A673 (cell line): ENCODE measurements at regions of chr12 and their contacts with region 1.

Region 1: DNA sequence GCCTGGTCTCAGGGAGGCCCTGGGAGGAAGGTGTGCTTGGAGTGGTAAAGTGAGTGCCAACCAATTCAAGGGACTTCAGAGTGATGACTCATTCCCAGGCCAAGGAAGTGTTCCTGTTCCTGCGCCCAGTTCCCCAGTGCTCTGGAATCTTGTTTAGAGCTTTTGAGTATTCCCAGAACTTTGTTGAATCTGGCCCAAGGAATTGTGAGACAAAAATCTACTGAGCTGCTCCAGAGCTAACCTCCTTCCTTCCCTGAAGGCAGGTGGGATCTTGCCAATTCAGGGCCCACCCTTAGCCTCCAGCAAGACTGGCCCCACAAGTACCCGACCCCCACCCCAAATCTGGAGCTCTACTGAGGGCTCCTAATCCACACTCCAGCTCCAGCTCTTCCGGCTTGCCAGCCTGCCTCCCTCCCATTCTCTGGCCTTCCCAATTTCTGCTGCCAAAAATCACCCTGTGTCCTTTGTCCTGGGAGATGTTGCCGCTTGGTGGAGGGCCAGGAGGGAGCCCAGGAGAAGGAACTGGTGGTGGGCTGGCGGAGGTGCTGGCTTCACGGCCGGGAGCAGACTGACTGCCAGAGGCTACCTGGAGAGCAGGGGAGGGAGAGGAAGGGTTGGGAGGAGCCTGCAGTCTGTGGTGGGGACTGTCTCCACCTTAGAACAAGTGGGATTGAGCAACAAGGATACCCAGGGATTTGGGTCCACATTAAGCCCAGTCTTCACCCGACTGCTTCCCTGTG is 2.0 kb upstream of the ATN1 start:
- DNase-seq: peak; percentile 81
- H3K4me3 ChIP-seq: peak overlapping the region; percentile 36
- H3K27ac ChIP-seq: peak overlapping the region; percentile 95
- H3K4me1 ChIP-seq: peaks cover 39% of the 10 kb centered on the region
- H3K27me3 ChIP-seq: no peaks in the 10 kb centered on the region
- CTCF ChIP-seq: no peak

Region 2: DNA sequence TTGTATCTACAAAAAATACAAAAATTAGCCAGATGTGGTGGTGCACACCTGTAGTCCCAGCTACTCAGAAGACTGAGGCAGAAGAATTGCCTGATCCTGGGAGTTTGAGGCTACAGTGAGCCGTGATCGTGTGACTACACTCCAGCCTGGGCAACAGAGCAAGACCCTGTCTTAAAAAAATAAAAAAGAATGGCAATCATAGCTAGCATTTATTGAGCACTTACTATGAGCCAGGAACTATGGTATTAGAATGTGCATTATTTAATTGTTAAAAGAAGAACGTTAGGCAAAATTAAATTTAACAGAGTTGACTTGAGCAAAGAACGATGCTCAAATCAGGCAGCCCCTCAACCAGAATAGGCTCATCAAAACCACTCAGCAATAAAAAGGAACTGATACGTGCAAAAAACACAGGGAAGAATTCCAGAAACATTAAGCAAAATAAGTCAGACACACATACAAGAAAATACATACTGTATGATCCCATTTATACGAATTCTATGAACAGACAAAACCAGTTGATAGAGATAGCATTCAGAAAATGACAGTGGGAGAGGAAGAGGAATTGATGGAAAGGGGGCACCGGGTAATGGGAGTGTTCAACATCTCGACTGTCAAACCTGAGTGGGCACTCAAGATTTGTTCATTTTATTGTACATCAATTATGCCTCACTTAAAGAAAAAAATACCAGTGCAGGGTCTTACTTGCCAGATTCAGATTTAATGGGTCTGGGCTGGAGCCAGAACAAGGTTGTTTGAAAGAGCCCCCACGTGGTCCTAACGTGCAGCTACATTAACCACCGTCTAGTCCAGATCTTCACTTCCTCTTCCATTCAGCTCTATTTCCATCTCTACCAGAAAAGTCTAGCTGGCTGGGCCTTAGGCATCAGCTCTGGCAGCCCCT is 558.4 kb before region 1 on chr12:
- CTCF ChIA-PET with region 1: no interaction called
- POLR2A ChIA-PET with region 1: no interaction called
- intact Hi-C with region 1: no loop called
- DNase-seq: peak; percentile 76
- H3K4me3 ChIP-seq: no peak overlapping the region
- H3K27ac ChIP-seq: no peak overlapping the region
- H3K4me1 ChIP-seq: peaks cover 18% of the 10 kb centered on the region
- H3K27me3 ChIP-seq: no peaks in the 10 kb centered on the region
- CTCF ChIP-seq: peak; percentile 47

Region 3: GRCh38 chr12:6688999-6689882 is 236.5 kb before region 1 on chr12 and contains the start of gene ZNF384:
- CTCF ChIA-PET with region 1: no interaction called
- POLR2A ChIA-PET with region 1: no interaction called
- intact Hi-C with region 1: no loop called
- DNase-seq: peak; percentile 99
- H3K4me3 ChIP-seq: peak within 1 kb of the TSS; percentile 86
- H3K27ac ChIP-seq: peak within 1 kb of the TSS; percentile 100
- H3K4me1 ChIP-seq: peaks cover 29% of the 10 kb centered on the region
- H3K27me3 ChIP-seq: no peaks in the 10 kb centered on the region
- CTCF ChIP-seq: no peak
- total RNA-seq, gene ZNF384: 88.8 and 92.5 TPM in 2 replicates

Region 4: GRCh38 chr12:6937481-6938297 is 12.0 kb after region 1 on chr12:
- CTCF ChIA-PET with region 1: interaction called, 11 read pairs
- POLR2A ChIA-PET with region 1: no interaction called
- intact Hi-C with region 1: loop called (anchors 2 kb)
- DNase-seq: peak; percentile 98
- H3K4me3 ChIP-seq: peak overlapping the region; percentile 62
- H3K27ac ChIP-seq: peak overlapping the region; percentile 98
- H3K4me1 ChIP-seq: peaks cover 16% of the 10 kb centered on the region
- H3K27me3 ChIP-seq: no peaks in the 10 kb centered on the region
- CTCF ChIP-seq: peak; percentile 99

Region 5: DNA sequence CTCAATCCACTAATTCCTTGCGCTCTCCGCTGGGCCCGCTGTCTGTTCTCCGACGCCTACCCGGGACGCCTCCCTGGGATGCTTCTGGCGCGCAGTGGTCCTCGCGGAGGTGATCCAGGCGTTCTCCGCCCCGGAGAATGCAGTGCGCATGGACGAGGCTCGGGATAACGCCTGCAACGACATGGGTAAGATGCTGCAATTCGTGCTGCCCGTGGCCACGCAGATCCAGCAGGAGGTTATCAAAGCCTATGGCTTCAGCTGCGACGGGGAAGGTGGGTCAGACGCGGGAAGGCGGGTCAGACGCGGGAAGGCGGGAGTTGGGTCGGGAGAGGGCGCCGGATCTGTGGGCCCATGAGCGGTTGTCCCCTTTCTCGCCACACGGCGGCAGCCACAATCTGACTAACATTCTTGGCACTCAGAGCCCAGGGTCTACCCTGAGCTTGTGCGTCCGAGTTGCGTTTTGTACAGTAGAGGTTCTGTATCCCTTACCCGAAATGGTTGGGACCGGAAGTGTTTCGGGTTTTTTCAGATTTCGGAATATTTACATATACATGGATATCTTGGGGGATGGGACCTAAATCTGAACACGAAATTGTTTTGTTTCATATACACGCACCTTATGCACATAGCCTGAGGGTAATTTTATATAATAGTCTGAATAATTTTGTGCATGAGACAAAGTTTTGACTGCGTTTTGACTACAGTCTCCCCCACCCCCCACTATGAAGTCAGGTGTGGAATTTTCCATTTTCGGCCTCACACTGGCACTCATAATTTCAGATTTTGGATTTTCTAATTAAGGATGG is 18.9 kb after region 1 on chr12:
- CTCF ChIA-PET with region 1: interaction called, 5 read pairs
- POLR2A ChIA-PET with region 1: interaction called, 11 read pairs
- intact Hi-C with region 1: loop called (anchors 2 kb)
- DNase-seq: peak; percentile 97
- H3K4me3 ChIP-seq: peak overlapping the region; percentile 64
- H3K27ac ChIP-seq: peak overlapping the region; percentile 99
- H3K4me1 ChIP-seq: peaks cover 18% of the 10 kb centered on the region
- H3K27me3 ChIP-seq: no peaks in the 10 kb centered on the region
- CTCF ChIP-seq: peak; percentile 92

Region 6: DNA sequence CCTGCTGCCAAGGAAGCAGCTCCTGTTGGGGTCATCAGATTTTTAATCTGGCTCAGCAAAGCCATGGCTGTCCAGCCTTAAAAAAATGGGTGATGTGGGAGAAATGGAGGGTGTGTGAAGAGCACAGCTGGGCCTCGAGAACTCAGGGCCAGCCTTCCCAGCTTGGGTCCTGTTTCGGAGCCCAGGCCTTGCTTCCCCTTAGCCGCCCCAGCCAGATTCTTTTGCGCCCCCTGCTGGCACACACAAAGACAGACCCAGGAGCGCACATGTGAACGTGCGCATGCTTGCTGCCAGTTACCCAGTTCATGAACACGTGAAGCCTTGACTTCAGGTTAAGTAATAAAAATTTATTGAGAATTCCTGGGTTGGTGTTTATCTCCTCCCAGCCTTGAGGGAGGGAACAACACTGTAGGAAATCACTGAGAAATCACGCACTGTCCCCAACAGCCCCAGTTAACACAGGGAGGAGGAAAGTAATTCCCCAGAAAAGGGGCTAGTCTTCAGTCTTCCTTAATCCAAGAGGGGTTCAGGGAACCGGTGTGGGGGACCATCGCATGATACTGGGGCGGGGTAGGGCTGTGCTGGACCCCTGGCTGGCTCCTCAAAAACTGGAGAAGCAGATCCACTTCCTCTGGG is 39.4 kb after region 1 on chr12:
- CTCF ChIA-PET with region 1: interaction called, 9 read pairs
- POLR2A ChIA-PET with region 1: no interaction called
- intact Hi-C with region 1: loop called (anchors 1 kb)
- DNase-seq: peak; percentile 95
- H3K4me3 ChIP-seq: no peak overlapping the region
- H3K27ac ChIP-seq: peak overlapping the region; percentile 77
- H3K4me1 ChIP-seq: peaks cover 60% of the 10 kb centered on the region
- H3K27me3 ChIP-seq: no peaks in the 10 kb centered on the region
- CTCF ChIP-seq: peak; percentile 96

Region 7: DNA sequence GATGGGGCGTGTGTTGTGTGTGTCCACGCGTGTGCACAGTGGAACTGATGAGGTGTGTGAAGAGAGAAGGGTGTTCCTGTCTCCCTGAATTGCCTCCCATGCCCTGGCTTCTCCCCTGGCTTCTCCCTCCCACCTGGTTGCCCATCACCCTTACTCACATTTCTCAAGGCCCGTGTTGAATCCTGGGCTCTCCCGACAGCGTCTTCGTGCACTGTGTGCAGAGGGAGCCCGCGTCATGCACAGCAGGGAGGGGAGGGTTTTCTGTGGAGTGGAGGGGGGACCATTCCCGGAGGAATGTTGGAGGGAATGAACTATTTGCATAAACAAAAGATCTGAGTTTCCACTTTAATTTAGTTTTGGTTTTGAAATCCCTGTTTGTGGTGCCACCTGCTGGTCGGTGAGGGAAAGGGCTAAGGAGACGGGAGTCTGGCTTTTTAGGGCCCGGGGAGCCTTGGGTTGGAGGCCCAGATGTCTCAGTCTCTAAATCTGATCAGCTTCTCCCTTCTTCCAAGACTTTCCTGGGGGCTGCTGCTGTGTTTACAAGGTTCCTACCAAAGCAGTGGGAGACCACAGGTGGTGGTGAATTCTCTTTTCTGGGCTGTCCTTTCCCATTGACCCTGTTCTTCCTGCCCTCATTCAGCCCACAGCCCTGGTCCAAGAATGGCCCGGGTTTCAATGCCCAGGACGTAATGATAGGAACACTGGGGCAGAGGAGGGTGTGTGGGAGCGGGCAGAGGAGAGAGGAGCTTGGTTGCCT is 166.7 kb after region 1 on chr12 and contains the start of gene C1R:
- CTCF ChIA-PET with region 1: no interaction called
- POLR2A ChIA-PET with region 1: no interaction called
- intact Hi-C with region 1: loop called (anchors 5 kb)
- DNase-seq: peak; percentile 79
- H3K4me3 ChIP-seq: peak within 1 kb of the TSS; percentile 47
- H3K27ac ChIP-seq: no peak within 1 kb of the TSS
- H3K4me1 ChIP-seq: peaks cover 8% of the 10 kb centered on the region
- H3K27me3 ChIP-seq: no peaks in the 10 kb centered on the region
- CTCF ChIP-seq: peak; percentile 90
- total RNA-seq, gene C1R: 10.9 and 15.0 TPM in 2 replicates

Region 8: DNA sequence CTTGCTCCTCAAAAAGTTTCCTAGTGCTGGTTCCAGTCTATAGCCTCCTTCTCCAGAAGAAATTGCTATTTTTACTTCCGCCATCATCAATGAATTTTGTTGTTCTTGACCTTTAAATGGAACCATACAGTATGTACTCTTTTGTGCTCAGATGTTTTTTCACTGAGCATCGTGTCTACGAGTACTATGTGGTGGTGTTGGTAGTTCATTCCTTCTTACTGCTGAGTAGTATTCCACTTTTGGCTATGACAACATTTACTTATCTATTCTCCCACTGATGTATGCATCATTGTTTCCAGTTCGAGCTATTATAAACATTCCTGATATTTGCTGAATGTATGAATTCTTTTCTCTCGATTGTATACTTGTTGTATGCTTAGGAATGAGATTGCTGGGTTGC is 918.4 kb after region 1 on chr12:
- CTCF ChIA-PET with region 1: no interaction called
- POLR2A ChIA-PET with region 1: no interaction called
- intact Hi-C with region 1: no loop called
- DNase-seq: no peak
- H3K4me3 ChIP-seq: no peak overlapping the region
- H3K27ac ChIP-seq: no peak overlapping the region
- H3K4me1 ChIP-seq: no peaks in the 10 kb centered on the region
- H3K27me3 ChIP-seq: no peaks in the 10 kb centered on the region
- CTCF ChIP-seq: no peak